Activated naive CD4-positive, alpha-beta T cell treated with anti-CD3 and anti-CD28 coated beads, Interleukin-2, amount 10 ng/mL, durations not matched to agents 7 days and 5 days (primary cell): ENCODE measurements at regions of chrX and their contacts with region 1.

Region 1: GRCh38 chrX:9995855-9996339 is 28.7 kb downstream of the CLDN34 start:
- DNase-seq: peak; percentile 79
- H3K4me3 Mint-ChIP-seq: no peak overlapping the region
- H3K27ac Mint-ChIP-seq: no peak overlapping the region
- H3K4me1 Mint-ChIP-seq: peaks cover 4% of the 10 kb centered on the region
- H3K27me3 Mint-ChIP-seq: no peaks in the 10 kb centered on the region

Region 2: GRCh38 chrX:10011261-10011931 is 15.5 kb after region 1 on chrX:
- CTCF ChIA-PET with region 1: interaction called, 12 read pairs
- DNase-seq: no peak
- H3K4me3 Mint-ChIP-seq: no peak overlapping the region
- H3K27ac Mint-ChIP-seq: peak overlapping the region; percentile 17
- H3K4me1 Mint-ChIP-seq: peaks cover 30% of the 10 kb centered on the region
- H3K27me3 Mint-ChIP-seq: peaks cover 34% of the 10 kb centered on the region

Region 3: DNA sequence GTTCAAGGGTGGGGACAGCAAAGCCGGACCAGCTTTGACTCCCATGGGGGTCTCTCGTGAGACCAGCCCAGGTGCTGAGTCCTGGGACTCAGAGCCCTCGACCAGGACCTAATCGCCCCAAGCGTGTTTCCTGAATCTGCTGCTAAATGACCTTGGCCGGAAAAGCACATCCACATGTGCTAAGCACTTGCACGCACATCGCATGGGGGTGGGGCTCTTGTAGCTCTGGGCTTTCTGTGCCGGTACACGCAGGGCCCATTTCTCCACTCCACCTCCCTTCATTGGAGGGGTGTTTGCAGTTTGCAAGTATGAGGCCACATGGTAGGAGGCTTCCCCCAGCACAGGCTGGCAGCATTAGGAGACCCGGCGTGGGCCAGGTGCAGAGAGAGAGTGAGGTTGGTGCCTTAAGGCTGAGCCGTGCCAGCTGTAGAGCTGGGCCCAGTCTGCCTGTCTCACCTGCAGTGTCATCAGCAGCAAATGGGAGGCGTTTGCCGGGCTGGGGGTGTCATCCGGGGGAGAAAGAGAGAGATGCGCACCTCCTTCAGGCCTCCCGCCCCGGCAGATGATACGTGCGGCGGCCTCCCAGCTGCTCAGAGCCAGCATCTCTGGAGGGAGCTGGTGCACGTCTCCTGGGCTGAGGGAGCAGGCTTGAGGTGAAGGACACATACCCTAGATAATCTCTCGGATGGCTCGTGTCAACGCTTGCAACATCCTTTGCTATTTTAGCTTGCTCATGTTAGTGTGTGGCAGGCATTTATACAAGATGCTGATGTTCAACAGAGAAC is 115.7 kb after region 1 on chrX:
- CTCF ChIA-PET with region 1: interaction called, 63 read pairs
- DNase-seq: peak; percentile 66
- H3K4me3 Mint-ChIP-seq: peak overlapping the region; percentile 48
- H3K27ac Mint-ChIP-seq: peak overlapping the region; percentile 98
- H3K4me1 Mint-ChIP-seq: peaks cover 61% of the 10 kb centered on the region
- H3K27me3 Mint-ChIP-seq: no peaks in the 10 kb centered on the region

Region 4: DNA sequence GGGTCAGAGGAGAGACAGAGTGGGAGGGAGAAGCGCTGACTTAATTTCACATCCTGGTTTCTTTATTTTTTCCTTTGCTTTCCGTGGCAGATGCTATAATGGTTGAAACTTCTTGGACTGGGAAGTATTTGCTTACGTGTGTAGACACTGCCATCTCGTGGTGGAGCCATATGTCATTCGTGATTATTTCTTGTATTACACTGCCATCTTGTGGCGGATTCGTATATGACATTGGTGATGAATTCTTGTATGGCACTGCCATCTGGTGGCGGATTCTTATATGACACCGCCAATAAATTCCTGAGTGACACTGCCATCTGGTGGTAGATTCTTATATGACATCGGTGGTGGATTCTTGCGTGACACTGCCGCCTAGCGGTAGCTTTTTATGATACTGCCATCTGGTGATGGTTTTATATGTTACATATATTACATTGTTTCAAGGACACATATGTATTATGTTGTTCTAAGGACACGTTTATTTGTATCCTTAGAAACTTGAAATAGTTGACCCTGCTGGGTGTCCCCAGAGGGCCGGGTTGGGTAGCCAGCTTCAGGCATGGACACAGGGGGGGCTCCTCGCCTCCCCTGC is 123.6 kb after region 1 on chrX:
- CTCF ChIA-PET with region 1: interaction called, 63 read pairs
- DNase-seq: peak; percentile 66
- H3K4me3 Mint-ChIP-seq: no peak overlapping the region
- H3K27ac Mint-ChIP-seq: no peak overlapping the region
- H3K4me1 Mint-ChIP-seq: peaks cover 8% of the 10 kb centered on the region
- H3K27me3 Mint-ChIP-seq: no peaks in the 10 kb centered on the region